H1 (cell line): ENCODE measurements at regions of chr10 and their contacts with region 1.

Region 1: GRCh38 chr10:94890264-94891022 is 48.0 kb upstream of the CYP2C9 start:
- DNase-seq: no peak
- H3K4me3 ChIP-seq: no peak overlapping the region
- H3K27ac ChIP-seq: no peak overlapping the region
- H3K4me1 ChIP-seq: no peaks in the 10 kb centered on the region
- H3K27me3 ChIP-seq: no peaks in the 10 kb centered on the region
- CTCF ChIP-seq: peak in 2 of 3 experiments; percentile 16 to 32; a peak in 3 of 4 replicates
- EP300 ChIP-seq: no peak
- POLR2A ChIP-seq: no peak
- RAD21 ChIP-seq: peak in 1 of 2 experiments; percentile 21; a peak in 2 of 4 replicates

Region 2: DNA sequence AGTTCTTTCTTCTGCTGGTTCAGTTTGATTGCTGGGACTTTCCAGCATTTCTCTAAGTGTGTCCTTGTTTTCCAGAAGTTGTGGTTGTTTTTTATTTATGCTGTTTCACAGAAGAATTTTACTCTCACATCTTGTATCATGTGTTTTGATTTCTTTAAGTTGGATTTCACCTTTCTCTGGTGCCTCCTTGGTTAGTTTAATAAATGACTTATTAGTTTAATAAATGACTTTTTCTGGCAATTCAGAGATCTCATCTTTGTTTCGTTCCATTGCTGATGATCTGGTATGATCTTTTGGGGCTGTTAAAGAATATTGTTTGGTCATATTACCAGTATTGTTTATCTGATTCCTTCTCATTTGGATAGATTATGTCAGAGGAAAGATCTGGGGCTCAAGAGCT is 11.8 kb before region 1 on chr10:
- CTCF ChIA-PET with region 1: interaction called, 10 read pairs
- POLR2A ChIA-PET with region 1: no interaction called
- DNase-seq: no peak
- H3K4me3 ChIP-seq: no peak overlapping the region
- H3K27ac ChIP-seq: no peak overlapping the region
- H3K4me1 ChIP-seq: no peaks in the 10 kb centered on the region; a peak in 1 of 7 replicates
- H3K27me3 ChIP-seq: no peaks in the 10 kb centered on the region
- CTCF ChIP-seq: no peak
- EP300 ChIP-seq: no peak
- POLR2A ChIP-seq: no peak
- RAD21 ChIP-seq: no peak